ENCODE measurements at regions of chr10 and their contacts with region 1.

Region 1: GRCh38 chr10:118720685-118721538 is 33.9 kb downstream of the CACUL1 start:
- DNase-seq: peak; percentile 49 to 63 (median 60)
- H3K4me3 ChIP-seq: no peak overlapping the region
- H3K4me3 Mint-ChIP-seq: no peak overlapping the region
- H3K27ac ChIP-seq: no peak overlapping the region
- H3K27ac Mint-ChIP-seq: no peak overlapping the region
- H3K4me1 ChIP-seq: peaks cover 5% of the 10 kb centered on the region
- H3K4me1 Mint-ChIP-seq: peaks cover 0 to 11% (median 4%) of the 10 kb centered on the region in 4 donors
- H3K27me3 ChIP-seq: no peaks in the 10 kb centered on the region
- H3K27me3 Mint-ChIP-seq: no peaks in the 10 kb centered on the region

Region 2: DNA sequence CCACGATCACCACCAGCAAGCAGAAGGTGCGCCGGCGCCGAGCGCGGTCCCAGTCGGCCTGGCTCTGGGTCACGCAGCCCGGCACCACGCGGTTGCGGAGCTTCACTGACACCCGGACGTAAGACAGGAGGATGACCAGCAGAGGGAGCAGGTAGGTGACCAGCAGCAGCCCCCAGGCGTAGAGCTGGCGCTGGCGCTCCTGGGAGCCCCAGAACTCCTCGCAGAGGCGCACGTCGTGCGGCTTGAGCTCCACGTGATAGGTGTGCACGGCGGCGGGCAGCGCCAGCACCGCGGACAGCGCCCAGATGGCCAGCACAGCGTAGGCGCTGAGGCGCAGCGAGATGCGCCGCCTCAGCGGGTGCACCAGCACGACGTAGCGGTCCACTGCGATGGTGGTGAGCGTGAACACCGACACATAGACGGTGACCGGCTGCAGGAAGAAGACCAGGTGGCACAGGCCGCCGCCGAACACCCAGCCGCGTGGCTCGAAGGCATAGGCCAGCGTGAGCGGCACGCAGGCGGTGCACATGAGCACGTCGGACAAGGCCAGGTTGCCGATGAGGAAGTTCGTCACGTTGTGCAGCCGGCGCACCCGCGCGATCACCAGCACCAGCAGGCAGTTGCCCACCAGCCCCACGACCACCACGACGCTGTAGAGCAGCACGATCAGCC is 126.4 kb before region 1 on chr10:
- CTCF ChIA-PET with region 1: interaction called, 35 read pairs
- POLR2A ChIA-PET with region 1: no interaction called
- intact Hi-C with region 1: loop called (anchors 1 kb)
- DNase-seq: peak in 4 of 5 donors; percentile 20 to 35 (median 29)
- H3K4me3 ChIP-seq: no peak overlapping the region
- H3K4me3 Mint-ChIP-seq: peak overlapping the region in 3 of 8 donors; percentile 8 to 67 (median 50)
- H3K27ac ChIP-seq: no peak overlapping the region
- H3K27ac Mint-ChIP-seq: no peak overlapping the region
- H3K4me1 ChIP-seq: peaks cover 17% of the 10 kb centered on the region
- H3K4me1 Mint-ChIP-seq: peaks cover 8 to 34% (median 14%) of the 10 kb centered on the region in 4 donors
- H3K27me3 ChIP-seq: peaks cover 17% of the 10 kb centered on the region
- H3K27me3 Mint-ChIP-seq: peaks cover 41 to 44% of the 10 kb centered on the region in 2 donors

Region 3: GRCh38 chr10:118698421-118698820 is 22.5 kb before region 1 on chr10:
- CTCF ChIA-PET with region 1: interaction called, 5 read pairs
- POLR2A ChIA-PET with region 1: no interaction called
- intact Hi-C with region 1: loop called (anchors 2 kb)
- DNase-seq: peak; percentile 79 to 94 (median 83)
- H3K4me3 ChIP-seq: peak overlapping the region in 1 of 2 donors; percentile 32
- H3K4me3 Mint-ChIP-seq: peak overlapping the region; percentile 69 to 86 (median 78)
- H3K27ac ChIP-seq: peak overlapping the region; percentile 20
- H3K27ac Mint-ChIP-seq: peak overlapping the region; percentile 59 to 91 (median 83)
- H3K4me1 ChIP-seq: peaks cover 24% of the 10 kb centered on the region
- H3K4me1 Mint-ChIP-seq: peaks cover 16 to 50% (median 38%) of the 10 kb centered on the region in 4 donors
- H3K27me3 ChIP-seq: no peaks in the 10 kb centered on the region
- H3K27me3 Mint-ChIP-seq: no peaks in the 10 kb centered on the region

Region 4: GRCh38 chr10:118745056-118745455 is 24.1 kb after region 1 on chr10:
- CTCF ChIA-PET with region 1: no interaction called
- POLR2A ChIA-PET with region 1: no interaction called
- intact Hi-C with region 1: no loop called
- DNase-seq: no peak
- H3K4me3 ChIP-seq: no peak overlapping the region
- H3K4me3 Mint-ChIP-seq: peak overlapping the region in 1 of 8 donors; percentile 22
- H3K27ac ChIP-seq: no peak overlapping the region
- H3K27ac Mint-ChIP-seq: no peak overlapping the region
- H3K4me1 ChIP-seq: peaks cover 52% of the 10 kb centered on the region
- H3K4me1 Mint-ChIP-seq: peaks cover 45 to 88% (median 61%) of the 10 kb centered on the region in 4 donors
- H3K27me3 ChIP-seq: no peaks in the 10 kb centered on the region
- H3K27me3 Mint-ChIP-seq: no peaks in the 10 kb centered on the region

Region 5: GRCh38 chr10:118800920-118801319 is 80.0 kb after region 1 on chr10:
- CTCF ChIA-PET with region 1: interaction called, 3 read pairs
- POLR2A ChIA-PET with region 1: no interaction called
- intact Hi-C with region 1: loop called (anchors 1 kb)
- DNase-seq: peak in 1 of 5 donors; percentile 3
- H3K4me3 ChIP-seq: no peak overlapping the region
- H3K4me3 Mint-ChIP-seq: no peak overlapping the region
- H3K27ac ChIP-seq: no peak overlapping the region
- H3K27ac Mint-ChIP-seq: no peak overlapping the region
- H3K4me1 ChIP-seq: no peaks in the 10 kb centered on the region
- H3K4me1 Mint-ChIP-seq: no peaks in the 10 kb centered on the region
- H3K27me3 ChIP-seq: no peaks in the 10 kb centered on the region
- H3K27me3 Mint-ChIP-seq: peaks cover 7 to 21% of the 10 kb centered on the region in 2 donors

Region 6: DNA sequence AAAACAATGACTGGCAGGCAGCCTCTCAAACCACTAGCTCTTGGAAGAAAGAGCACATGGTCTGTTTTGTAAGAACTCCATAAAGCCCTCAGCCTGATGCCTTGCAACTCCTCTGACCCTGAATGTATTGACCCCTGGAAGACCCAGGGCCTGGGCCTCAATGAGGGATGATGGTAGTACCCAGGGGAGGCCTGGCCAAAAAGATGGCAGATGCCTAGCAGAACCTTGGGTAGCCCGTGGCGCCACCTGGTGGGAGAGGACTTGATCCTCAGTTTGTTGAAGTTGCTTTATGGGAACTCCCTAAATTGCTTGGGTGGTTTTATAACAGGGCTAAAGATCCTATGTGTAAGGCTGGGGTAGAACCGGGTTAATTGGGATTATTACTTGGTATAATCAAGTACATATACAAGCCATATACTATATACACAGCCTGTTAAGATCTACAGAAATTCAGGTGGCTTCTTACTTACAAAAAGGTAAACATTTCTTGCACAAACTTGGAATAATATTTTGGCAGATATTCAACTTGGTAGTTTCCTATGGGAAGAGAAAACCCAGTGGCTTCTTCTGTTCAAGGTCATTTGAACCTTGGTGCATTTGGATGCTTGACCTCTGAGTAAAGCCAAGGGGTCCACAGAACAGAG is 129.6 kb after region 1 on chr10:
- CTCF ChIA-PET with region 1: no interaction called
- POLR2A ChIA-PET with region 1: no interaction called
- intact Hi-C with region 1: loop called (anchors 1 kb)
- DNase-seq: peak; percentile 25 to 62 (median 30)
- H3K4me3 ChIP-seq: no peak overlapping the region
- H3K4me3 Mint-ChIP-seq: no peak overlapping the region
- H3K27ac ChIP-seq: no peak overlapping the region
- H3K27ac Mint-ChIP-seq: no peak overlapping the region
- H3K4me1 ChIP-seq: no peaks in the 10 kb centered on the region
- H3K4me1 Mint-ChIP-seq: no peaks in the 10 kb centered on the region
- H3K27me3 ChIP-seq: no peaks in the 10 kb centered on the region
- H3K27me3 Mint-ChIP-seq: peaks cover 2 to 8% of the 10 kb centered on the region in 2 donors